GM12878 (cell line): ENCODE measurements at regions of chr16 and their contacts with region 1.

Region 1: DNA sequence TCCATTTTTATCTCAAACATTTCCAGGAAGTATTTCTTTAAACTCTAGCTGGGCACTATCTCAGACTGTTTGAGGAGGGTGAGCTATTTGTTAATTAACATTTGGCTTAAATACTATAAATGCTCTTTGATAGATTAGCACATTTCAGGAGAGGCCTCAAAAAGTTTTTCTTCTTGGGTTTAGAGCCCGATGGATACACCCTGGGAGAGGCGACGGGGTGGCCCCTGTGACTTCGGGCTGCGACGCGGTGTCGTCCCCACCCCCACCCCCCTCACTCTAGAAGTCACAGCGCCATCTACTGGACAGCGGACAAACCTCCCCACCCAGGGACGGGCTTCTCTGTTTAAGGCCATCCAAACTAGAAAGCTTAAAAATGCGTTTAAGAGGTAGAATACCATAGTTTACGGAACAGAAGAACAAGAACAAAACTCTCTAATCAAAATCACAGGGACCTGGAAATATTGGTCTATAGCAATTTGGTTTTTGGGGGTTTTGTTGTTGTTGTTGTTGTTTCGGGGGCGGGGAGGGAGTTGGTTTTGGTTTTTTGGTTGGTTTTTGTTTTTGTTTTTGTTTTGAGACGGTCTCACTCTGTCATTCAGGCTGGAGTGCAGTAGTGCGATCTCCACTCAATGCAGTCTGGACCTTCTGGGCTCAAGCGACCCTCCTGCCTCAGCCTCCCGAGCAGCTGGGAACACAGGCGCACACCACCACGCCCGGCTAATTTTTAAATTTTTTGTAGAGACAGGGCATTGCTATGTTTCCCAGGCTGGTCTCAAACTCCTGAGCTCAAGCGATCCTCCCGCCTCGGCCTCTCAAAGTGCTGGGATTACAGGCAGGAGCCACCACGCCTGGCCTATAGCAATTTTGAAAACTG is 254.4 kb downstream of the C16orf95 start:
- DNase-seq: no peak
- ATAC-seq: peak; percentile 85
- H3K4me3 ChIP-seq: no peak overlapping the region
- H3K27ac ChIP-seq: no peak overlapping the region
- H3K4me1 ChIP-seq: no peaks in the 10 kb centered on the region
- H3K27me3 ChIP-seq: peaks cover 0 to 4% of the 10 kb centered on the region in 2 experiments; a peak in 2 of 4 replicates
- CTCF ChIP-seq: peak; percentile 67 to 74 (median 69)
- EP300 ChIP-seq: no peak
- POLR2A ChIP-seq: no peak
- RAD21 ChIP-seq: peak; percentile 64

Region 2: DNA sequence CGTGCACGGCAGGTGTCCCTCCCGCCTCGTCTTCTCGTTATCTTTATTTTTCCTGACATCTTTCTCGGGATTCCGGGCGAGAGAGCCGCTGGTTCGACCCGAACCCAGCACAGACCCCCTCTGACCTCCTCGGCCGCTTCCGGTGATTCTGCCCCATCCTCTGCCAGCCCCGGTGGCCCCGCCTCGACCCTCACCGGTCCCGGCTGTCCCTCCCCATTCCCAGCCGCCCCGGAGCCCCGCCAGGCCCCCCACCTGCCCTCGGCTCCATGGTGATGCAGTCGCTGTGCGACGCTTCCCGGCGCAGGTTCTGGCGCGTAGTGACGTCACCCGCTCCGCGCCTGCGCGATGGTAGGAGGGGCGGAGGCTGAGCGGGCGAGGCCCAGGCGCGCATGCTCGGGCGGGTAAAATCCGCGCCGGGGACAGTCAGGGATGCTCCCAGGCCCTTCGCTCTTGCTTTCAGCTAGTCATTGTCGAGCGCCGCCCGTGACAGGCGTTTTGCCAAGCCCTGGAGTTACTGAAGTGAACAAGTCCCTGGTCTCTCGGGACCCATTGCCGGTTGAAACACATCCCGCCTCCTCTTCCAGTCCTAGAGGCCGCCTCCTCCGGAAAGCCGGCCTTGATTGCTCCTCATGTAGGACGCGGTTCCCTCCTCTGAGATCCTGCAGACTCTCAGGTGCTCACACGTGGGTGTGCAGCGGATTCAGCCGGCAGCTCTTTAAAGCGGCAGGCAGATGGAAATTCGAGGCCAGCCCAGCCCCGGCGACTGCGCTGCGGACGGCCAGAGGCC is 507.7 kb before region 1 on chr16 and contains the start of gene MTHFSD:
- CTCF ChIA-PET with region 1: interaction called, 11 read pairs
- POLR2A ChIA-PET with region 1: no interaction called
- RAD21 ChIA-PET with region 1: interaction called, 6 read pairs
- SMC1A ChIA-PET with region 1: interaction called, 3 read pairs
- in situ Hi-C with region 1: loop called (anchors 5 kb)
- intact Hi-C with region 1: no loop called
- DNase-seq: peak; percentile 74
- ATAC-seq: peak; percentile 98
- H3K4me3 ChIP-seq: peak within 1 kb of the TSS; percentile 92
- H3K27ac ChIP-seq: peak within 1 kb of the TSS; percentile 81
- H3K4me1 ChIP-seq: no peaks in the 10 kb centered on the region; the same call in 1 of the 2 replicates
- H3K27me3 ChIP-seq: no peaks in the 10 kb centered on the region
- CTCF ChIP-seq: no peak
- EP300 ChIP-seq: no peak
- POLR2A ChIP-seq: peak; percentile 91
- RAD21 ChIP-seq: no peak
- polyA plus RNA-seq, gene MTHFSD: 2.2 to 3.3 TPM

Region 3: DNA sequence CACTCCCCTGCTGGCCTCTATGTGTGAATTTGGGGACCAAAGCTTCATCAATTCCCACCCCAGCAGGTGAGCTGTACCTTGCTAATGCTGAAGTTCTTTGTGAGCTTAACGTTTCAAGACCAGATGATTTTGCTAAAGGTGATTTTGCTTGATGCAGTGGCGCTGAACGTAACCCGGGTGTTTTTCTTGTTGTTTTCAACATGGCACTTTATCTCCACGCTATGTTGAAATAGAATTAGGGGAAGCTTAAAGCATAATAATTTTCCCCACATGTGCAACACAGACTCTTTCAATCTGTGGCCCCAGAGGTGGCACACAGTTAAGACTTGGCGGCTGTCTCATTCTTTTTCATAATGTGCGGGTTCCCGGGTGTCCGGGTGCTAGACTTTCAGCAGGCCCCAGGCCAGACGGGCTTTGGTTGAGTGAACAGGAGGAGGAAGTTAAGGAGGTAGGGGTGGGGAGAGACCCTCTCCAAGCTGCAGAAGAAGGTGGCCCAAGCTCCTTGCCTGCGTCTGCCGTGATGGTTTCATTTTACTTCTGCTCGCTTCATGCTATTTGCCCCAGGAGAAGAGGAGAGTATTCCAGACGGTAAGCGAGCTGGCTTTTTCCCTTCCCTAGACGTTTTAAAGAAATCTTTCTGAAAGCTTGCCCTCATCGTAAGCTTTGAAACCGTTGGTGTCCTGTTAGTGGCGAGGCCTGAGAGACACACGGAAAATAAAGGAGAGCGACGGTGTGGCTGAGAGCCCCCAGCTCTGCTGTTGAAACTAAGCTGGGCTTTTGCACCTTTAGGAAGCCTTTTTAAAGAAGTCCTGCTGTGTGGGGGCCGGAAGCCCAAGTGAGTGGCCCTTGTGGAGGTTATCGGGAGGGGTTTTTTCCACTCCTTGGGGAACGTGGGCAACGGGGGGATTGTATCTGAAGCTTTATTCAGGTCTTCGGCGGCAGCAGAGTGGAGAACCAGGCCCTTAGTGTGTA is 492.0 kb before region 1 on chr16:
- CTCF ChIA-PET with region 1: interaction called, 89 read pairs
- POLR2A ChIA-PET with region 1: no interaction called
- RAD21 ChIA-PET with region 1: interaction called, 25 read pairs
- SMC1A ChIA-PET with region 1: no interaction called
- in situ Hi-C with region 1: no loop called
- intact Hi-C with region 1: no loop called
- DNase-seq: no peak
- ATAC-seq: no peak
- H3K4me3 ChIP-seq: no peak overlapping the region
- H3K27ac ChIP-seq: no peak overlapping the region
- H3K4me1 ChIP-seq: no peaks in the 10 kb centered on the region
- H3K27me3 ChIP-seq: peaks cover 4 to 11% of the 10 kb centered on the region in 2 experiments; a peak in 3 of 4 replicates
- CTCF ChIP-seq: no peak
- EP300 ChIP-seq: no peak
- POLR2A ChIP-seq: no peak
- RAD21 ChIP-seq: no peak

Region 4: DNA sequence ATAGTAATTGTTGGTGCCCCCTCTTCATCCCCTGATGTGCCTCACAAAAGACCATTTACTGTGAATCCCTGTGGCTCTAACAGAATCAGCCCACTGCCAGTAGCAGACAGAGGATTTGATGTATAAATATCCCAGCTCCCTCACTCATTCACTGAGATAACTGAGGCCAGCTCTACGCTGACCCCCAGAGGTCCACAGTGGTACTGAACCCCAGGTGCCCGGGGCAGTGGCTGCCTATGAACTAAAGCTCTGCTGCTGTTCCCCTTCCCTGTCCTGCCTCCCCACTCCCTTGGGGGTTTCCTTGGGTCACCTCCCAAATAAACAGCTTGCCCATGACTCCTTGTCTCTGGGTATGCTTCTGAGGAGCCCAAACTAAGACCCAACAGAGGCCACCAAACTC is 188.7 kb before region 1 on chr16:
- CTCF ChIA-PET with region 1: interaction called, 8 read pairs
- POLR2A ChIA-PET with region 1: no interaction called
- RAD21 ChIA-PET with region 1: interaction called, 3 read pairs
- SMC1A ChIA-PET with region 1: no interaction called
- in situ Hi-C with region 1: no loop called
- intact Hi-C with region 1: loop called (anchors 10 kb)
- DNase-seq: no peak
- ATAC-seq: peak; percentile 73
- H3K4me3 ChIP-seq: no peak overlapping the region
- H3K27ac ChIP-seq: no peak overlapping the region
- H3K4me1 ChIP-seq: no peaks in the 10 kb centered on the region
- H3K27me3 ChIP-seq: peaks cover 0 to 3% of the 10 kb centered on the region in 2 experiments; a peak in 3 of 4 replicates
- CTCF ChIP-seq: peak; percentile 53 to 74 (median 57); a peak in 5 of 6 replicates
- EP300 ChIP-seq: no peak
- POLR2A ChIP-seq: no peak
- RAD21 ChIP-seq: peak; percentile 47; the same call in 1 of the 2 replicates

Region 5: GRCh38 chr16:87006789-87007745 is 55.7 kb before region 1 on chr16:
- CTCF ChIA-PET with region 1: no interaction called
- POLR2A ChIA-PET with region 1: no interaction called
- RAD21 ChIA-PET with region 1: no interaction called
- SMC1A ChIA-PET with region 1: no interaction called
- in situ Hi-C with region 1: no loop called
- intact Hi-C with region 1: no loop called
- DNase-seq: no peak
- ATAC-seq: no peak
- H3K4me3 ChIP-seq: no peak overlapping the region
- H3K27ac ChIP-seq: no peak overlapping the region
- H3K4me1 ChIP-seq: no peaks in the 10 kb centered on the region
- H3K27me3 ChIP-seq: no peaks in the 10 kb centered on the region
- CTCF ChIP-seq: no peak
- EP300 ChIP-seq: no peak
- POLR2A ChIP-seq: no peak
- RAD21 ChIP-seq: no peak

Region 6: GRCh38 chr16:87076950-87077749 is 14.3 kb after region 1 on chr16:
- CTCF ChIA-PET with region 1: interaction called, 18 read pairs
- POLR2A ChIA-PET with region 1: no interaction called
- RAD21 ChIA-PET with region 1: interaction called, 3 read pairs
- SMC1A ChIA-PET with region 1: no interaction called
- in situ Hi-C with region 1: no loop called
- intact Hi-C with region 1: no loop called
- DNase-seq: no peak
- ATAC-seq: peak; percentile 77
- H3K4me3 ChIP-seq: no peak overlapping the region
- H3K27ac ChIP-seq: no peak overlapping the region
- H3K4me1 ChIP-seq: peaks cover 13% of the 10 kb centered on the region
- H3K27me3 ChIP-seq: no peaks in the 10 kb centered on the region; a peak in 1 of 4 replicates
- CTCF ChIP-seq: peak; percentile 60 to 68 (median 61)
- EP300 ChIP-seq: no peak
- POLR2A ChIP-seq: no peak
- RAD21 ChIP-seq: peak; percentile 36

Region 7: DNA sequence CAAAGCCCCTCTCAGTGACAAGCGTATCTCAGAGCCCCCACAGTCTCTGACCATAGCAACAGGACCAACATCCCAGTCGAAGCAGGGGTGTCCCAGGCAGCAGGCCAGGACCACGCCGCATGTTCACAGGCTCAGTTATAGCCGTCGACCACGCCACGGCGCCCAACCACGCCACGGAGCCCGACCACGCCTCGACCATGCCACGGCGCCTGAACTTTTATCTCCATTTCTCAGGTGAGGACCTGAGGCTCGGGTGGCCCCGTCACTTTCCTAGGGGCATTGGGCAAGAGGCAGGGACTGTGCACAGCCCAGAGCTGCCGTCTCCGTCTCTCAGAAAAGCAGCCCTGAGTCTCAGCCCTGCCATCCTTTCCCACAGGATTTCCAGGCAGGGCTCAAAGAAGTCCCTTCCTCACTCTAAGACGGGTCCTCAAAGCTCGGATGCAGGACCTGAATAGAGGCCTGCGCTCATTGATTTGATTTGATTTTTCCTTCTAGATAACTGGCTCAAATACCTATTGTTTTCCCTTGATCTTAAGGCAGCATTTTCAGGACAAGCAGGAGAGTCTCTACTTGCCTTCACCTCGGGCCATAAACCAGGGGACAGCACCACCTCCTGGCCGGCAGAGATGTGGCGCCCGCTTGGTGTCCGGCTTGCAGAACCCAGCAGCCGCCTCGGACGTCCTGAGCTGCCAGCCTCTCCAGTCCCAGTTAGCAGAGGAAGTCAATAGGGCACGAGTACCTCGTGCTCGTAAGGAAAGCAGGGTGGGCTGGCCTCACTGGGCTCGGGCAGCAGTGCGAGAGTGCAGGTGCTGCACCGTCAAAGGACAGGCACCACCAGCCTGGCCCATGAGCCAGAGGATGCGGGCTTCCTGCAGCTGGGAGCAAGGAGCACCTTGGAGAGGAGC is 215.6 kb after region 1 on chr16:
- CTCF ChIA-PET with region 1: interaction called, 3 read pairs
- POLR2A ChIA-PET with region 1: no interaction called
- RAD21 ChIA-PET with region 1: no interaction called
- SMC1A ChIA-PET with region 1: no interaction called
- in situ Hi-C with region 1: no loop called
- intact Hi-C with region 1: loop called (anchors 10 kb)
- DNase-seq: no peak
- ATAC-seq: peak; percentile 97
- H3K4me3 ChIP-seq: no peak overlapping the region
- H3K27ac ChIP-seq: no peak overlapping the region
- H3K4me1 ChIP-seq: no peaks in the 10 kb centered on the region
- H3K27me3 ChIP-seq: no peaks in the 10 kb centered on the region
- CTCF ChIP-seq: peak; percentile 77 to 84 (median 82)
- EP300 ChIP-seq: no peak
- POLR2A ChIP-seq: no peak
- RAD21 ChIP-seq: peak; percentile 69

Region 8: GRCh38 chr16:87324411-87325275 is 261.8 kb after region 1 on chr16:
- CTCF ChIA-PET with region 1: no interaction called
- POLR2A ChIA-PET with region 1: no interaction called
- RAD21 ChIA-PET with region 1: no interaction called
- SMC1A ChIA-PET with region 1: no interaction called
- in situ Hi-C with region 1: no loop called
- intact Hi-C with region 1: no loop called
- DNase-seq: no peak
- ATAC-seq: peak; percentile 89
- H3K4me3 ChIP-seq: no peak overlapping the region
- H3K27ac ChIP-seq: no peak overlapping the region
- H3K4me1 ChIP-seq: no peaks in the 10 kb centered on the region
- H3K27me3 ChIP-seq: no peaks in the 10 kb centered on the region
- CTCF ChIP-seq: peak; percentile 72 to 89 (median 81)
- EP300 ChIP-seq: no peak
- POLR2A ChIP-seq: no peak
- RAD21 ChIP-seq: peak; percentile 64